ENCODE measurements at regions of chr1 and their contacts with region 1.

Region 1: GRCh38 chr1:246012341-246012740 is 494.7 kb downstream of the SMYD3 start:
- DNase-seq: no peak
- H3K4me3 Mint-ChIP-seq: no peak overlapping the region
- H3K27ac Mint-ChIP-seq: no peak overlapping the region
- H3K4me1 Mint-ChIP-seq: no peaks in the 10 kb centered on the region
- H3K27me3 Mint-ChIP-seq: no peaks in the 10 kb centered on the region

Region 2: DNA sequence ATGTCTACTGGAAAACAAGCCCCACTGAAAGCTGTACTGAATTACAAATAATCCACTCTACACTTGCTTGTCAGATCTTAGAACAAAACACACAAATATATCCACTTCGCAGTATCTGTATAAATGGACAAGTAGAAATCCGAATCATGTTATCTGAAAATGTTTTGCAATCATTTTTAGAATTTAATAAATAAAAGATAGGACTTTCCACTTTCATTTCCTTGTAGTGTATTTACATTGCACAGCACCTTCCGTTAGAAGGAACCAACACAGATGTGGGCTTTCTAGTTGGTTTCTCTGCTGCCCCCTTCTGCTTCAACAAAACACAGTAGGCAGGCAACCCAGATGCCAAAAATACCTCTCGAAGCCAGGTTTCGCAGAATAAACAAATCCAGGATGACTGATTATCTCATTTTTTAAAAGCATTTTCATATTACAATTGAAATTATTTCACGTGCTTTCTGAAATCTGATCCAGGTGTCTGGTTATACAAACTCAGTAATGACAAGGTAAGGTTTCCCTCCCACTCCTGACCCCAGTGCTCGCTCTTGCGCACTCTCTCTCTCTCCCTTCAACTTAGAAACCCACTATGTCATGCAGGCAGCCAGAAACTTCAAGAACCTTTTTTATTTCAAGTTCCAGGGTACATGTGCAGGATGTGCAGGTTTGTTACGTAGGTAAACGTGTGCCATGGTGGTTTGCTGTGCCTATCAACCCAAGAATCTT is 104.9 kb after region 1 on chr1:
- CTCF ChIA-PET with region 1: no interaction called
- POLR2A ChIA-PET with region 1: no interaction called
- intact Hi-C with region 1: loop called (anchors 1 kb)
- DNase-seq: peak; percentile 37
- H3K4me3 Mint-ChIP-seq: peak overlapping the region; percentile 10
- H3K27ac Mint-ChIP-seq: peak overlapping the region; percentile 43
- H3K4me1 Mint-ChIP-seq: peaks cover 11% of the 10 kb centered on the region
- H3K27me3 Mint-ChIP-seq: no peaks in the 10 kb centered on the region

Region 3: DNA sequence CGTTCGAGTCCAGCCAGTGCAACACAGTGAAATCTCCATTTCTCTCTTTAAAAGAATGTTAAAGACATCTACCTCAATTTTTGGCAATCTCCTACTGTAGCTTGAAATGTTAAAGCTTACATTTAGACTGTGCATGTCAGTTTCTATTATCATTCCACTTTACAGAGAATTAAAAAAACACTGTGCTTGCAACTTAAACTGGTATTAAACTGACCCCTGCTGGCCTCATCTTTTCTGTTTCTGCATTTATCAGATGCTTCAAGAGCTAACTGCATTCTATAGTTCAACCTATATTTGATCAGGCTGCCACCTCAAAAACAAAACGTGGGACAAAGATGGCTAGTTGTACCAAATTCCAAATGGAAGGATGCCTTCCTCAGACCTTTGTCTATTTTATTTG is 268.2 kb after region 1 on chr1:
- CTCF ChIA-PET with region 1: interaction called, 5 read pairs
- POLR2A ChIA-PET with region 1: no interaction called
- intact Hi-C with region 1: loop called (anchors 5 kb)
- DNase-seq: no peak
- H3K4me3 Mint-ChIP-seq: no peak overlapping the region
- H3K27ac Mint-ChIP-seq: no peak overlapping the region
- H3K4me1 Mint-ChIP-seq: no peaks in the 10 kb centered on the region
- H3K27me3 Mint-ChIP-seq: no peaks in the 10 kb centered on the region

Region 4: DNA sequence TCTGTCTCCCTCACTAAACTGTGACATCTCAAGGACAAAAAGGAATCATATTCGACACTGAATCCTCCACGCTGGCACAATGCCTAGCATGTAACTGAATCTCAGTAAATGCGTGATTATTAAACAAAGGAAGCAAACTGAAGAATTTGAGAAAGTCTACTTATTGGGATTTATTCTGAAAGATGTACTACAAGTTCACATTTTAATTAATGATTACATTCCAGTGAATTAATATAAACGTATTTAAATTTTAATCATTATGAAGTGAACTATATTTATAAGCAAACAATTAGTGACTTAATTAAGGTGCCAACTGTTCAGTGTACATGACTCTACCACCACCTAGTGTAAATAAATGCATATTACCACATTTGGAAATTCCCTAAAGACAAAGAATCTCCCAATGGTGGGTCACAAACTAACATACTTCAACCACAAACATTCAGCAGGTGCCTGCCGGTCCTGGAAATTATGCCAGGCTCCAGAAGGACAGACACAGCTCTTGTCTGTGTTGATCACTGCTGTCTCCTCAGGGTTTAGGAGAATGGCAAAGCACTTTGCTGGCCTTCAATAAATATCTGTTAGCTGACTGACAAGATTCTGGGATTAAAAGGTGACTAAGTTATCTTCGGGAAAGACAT is 438.4 kb after region 1 on chr1:
- CTCF ChIA-PET with region 1: interaction called, 16 read pairs
- POLR2A ChIA-PET with region 1: no interaction called
- intact Hi-C with region 1: loop called (anchors 1 kb)
- DNase-seq: no peak
- H3K4me3 Mint-ChIP-seq: no peak overlapping the region
- H3K27ac Mint-ChIP-seq: no peak overlapping the region
- H3K4me1 Mint-ChIP-seq: peaks cover 2% of the 10 kb centered on the region
- H3K27me3 Mint-ChIP-seq: no peaks in the 10 kb centered on the region

Region 5: GRCh38 chr1:246699095-246699735 is 686.9 kb after region 1 on chr1:
- CTCF ChIA-PET with region 1: no interaction called
- POLR2A ChIA-PET with region 1: no interaction called
- intact Hi-C with region 1: loop called (anchors 1 kb)
- DNase-seq: peak; percentile 92
- H3K4me3 Mint-ChIP-seq: peak overlapping the region; percentile 49
- H3K27ac Mint-ChIP-seq: no peak overlapping the region
- H3K4me1 Mint-ChIP-seq: peaks cover 6% of the 10 kb centered on the region
- H3K27me3 Mint-ChIP-seq: no peaks in the 10 kb centered on the region

Measured in activated CD4-positive, alpha-beta memory T cell treated with anti-CD3 and anti-CD28 coated beads for 36 hours (primary cell).